Activated T-helper 1 cell treated with anti-CD3 and anti-CD28 coated beads, Interleukin-12 subunit alpha, Interleukin-12 subunit beta, Interleukin-2, Interleukin-4 antibody, amounts not matched to agents 30 ng/mL and 10 ng/mL and 1 ng/mL, durations not matched to agents 14 hours and 24 hours and 36 hours (primary cell): ENCODE measurements at regions of chr19 and their contacts with region 1.

Region 1: DNA sequence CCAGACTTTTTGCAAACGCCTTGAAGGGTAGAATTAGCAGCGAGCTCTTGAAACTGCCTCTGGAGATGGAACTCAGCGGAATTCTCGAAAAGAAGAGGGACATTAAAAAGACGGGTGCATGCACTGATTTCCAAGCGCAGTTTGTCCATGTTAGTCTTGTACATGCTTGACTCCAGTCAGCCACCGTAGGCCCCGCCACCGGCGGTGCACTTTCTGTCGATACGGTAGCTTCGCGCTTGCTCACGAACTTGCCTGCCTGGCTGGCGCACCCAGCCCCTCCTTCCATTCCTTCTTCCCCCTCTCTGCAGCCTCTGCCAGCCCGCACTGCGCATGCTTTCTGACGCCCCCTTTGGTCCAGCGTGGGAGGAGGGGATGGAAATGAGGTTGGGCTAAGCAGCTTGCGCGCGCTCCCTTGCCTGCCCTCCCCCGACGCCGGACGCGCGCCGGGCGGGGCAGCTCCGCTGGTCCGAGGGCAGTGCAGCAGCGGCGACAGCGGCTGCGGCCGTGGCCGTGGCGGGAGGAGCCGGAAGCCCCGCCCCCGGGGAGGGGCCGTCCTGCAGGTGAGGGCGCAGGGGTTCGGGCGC is at the start of gene ZNF575:
- DNase-seq: peak; percentile 81
- H3K4me3 Mint-ChIP-seq: peak within 1 kb of the TSS; percentile 96
- H3K27ac Mint-ChIP-seq: peak within 1 kb of the TSS; percentile 99
- H3K4me1 Mint-ChIP-seq: peaks cover 23% of the 10 kb centered on the region
- H3K27me3 Mint-ChIP-seq: no peaks in the 10 kb centered on the region
- total RNA-seq, gene ZNF575: 1.4 and 2.6 TPM in 2 replicates

Region 2: DNA sequence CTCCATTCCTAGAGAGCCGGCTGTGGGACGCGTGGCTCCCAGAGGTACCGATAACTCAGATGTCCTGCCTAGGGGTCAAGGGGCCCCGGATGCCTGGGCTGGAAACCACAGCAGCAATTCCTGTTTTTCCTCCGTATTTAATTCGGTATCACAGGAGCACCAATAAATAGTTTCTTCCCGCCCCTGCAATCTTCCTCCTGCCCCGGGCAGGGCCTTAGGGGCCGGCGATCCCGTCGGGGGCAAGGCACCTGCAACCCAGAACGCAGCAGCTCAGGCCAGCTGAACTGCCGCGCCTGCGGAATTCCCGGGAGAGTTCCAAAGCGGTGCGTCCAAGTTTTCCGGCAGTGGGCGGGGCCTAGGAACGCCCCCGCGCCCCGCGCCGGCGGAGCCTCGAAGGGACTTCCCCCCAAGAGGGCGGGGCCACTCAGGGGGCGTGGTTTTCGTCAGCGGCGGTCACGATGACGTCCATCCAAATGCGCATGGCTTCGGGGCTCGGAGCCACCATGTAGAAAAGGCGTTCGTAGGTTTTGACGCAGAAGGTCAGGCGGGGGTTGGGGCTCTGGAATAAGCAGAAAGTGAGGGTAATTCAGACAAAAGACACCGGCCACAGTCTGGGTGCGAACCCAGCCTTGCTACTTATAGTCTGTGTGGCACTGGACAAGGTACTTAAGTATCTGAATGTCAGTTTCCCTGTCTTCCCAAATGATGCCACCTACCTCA is 57.9 kb before region 1 on chr19:
- intact Hi-C with region 1: loop called (anchors 1 kb)
- DNase-seq: peak; percentile 91
- H3K4me3 Mint-ChIP-seq: peak overlapping the region; percentile 77
- H3K27ac Mint-ChIP-seq: peak overlapping the region; percentile 89
- H3K4me1 Mint-ChIP-seq: peaks cover 14% of the 10 kb centered on the region
- H3K27me3 Mint-ChIP-seq: no peaks in the 10 kb centered on the region

Region 3: GRCh38 chr19:43519436-43520088 is 13.5 kb before region 1 on chr19:
- intact Hi-C with region 1: loop called (anchors 2 kb)
- DNase-seq: peak; percentile 63
- H3K4me3 Mint-ChIP-seq: peak overlapping the region; percentile 1
- H3K27ac Mint-ChIP-seq: peak overlapping the region; percentile 32
- H3K4me1 Mint-ChIP-seq: peaks cover 14% of the 10 kb centered on the region
- H3K27me3 Mint-ChIP-seq: no peaks in the 10 kb centered on the region

Region 4: DNA sequence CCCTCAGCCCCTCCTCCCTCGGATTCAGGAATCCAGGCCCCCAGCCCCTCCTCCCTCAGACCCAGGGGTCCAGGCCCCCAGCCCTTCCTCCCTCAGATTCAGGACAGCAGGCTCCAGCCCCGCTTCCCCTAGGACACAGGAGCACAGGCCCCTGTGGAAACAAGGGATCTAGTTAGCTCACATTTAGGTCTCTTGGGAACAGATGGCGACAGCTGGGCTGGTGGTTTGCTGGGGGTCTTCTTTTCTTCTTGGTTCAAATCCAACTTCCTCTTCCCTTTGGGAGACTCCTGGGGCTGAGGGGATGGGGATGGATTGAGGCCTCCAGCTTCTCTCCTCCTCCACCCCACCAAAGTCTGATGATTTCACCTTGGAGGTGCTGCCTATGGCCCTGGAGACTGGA is 19.6 kb after region 1 on chr19:
- intact Hi-C with region 1: no loop called
- DNase-seq: no peak
- H3K4me3 Mint-ChIP-seq: no peak overlapping the region
- H3K27ac Mint-ChIP-seq: no peak overlapping the region
- H3K4me1 Mint-ChIP-seq: peaks cover 9% of the 10 kb centered on the region
- H3K27me3 Mint-ChIP-seq: no peaks in the 10 kb centered on the region

Region 5: GRCh38 chr19:43562698-43563241 is 29.7 kb after region 1 on chr19:
- intact Hi-C with region 1: loop called (anchors 2 kb)
- DNase-seq: peak; percentile 54
- H3K4me3 Mint-ChIP-seq: peak overlapping the region; percentile 37
- H3K27ac Mint-ChIP-seq: peak overlapping the region; percentile 74
- H3K4me1 Mint-ChIP-seq: peaks cover 32% of the 10 kb centered on the region
- H3K27me3 Mint-ChIP-seq: no peaks in the 10 kb centered on the region

Region 6: GRCh38 chr19:43575156-43575950 is 42.3 kb after region 1 on chr19 and contains the starts of genes PINLYP and XRCC1:
- intact Hi-C with region 1: loop called (anchors 1 kb)
- DNase-seq: peak; percentile 95
- H3K4me3 Mint-ChIP-seq: peak within 1 kb of the TSS; percentile 96
- H3K27ac Mint-ChIP-seq: peak within 1 kb of the TSS; percentile 91
- H3K4me1 Mint-ChIP-seq: peaks cover 25% of the 10 kb centered on the region
- H3K27me3 Mint-ChIP-seq: peaks cover 3% of the 10 kb centered on the region
- total RNA-seq, gene PINLYP: 4.9 and 5.7 TPM in 2 replicates
- total RNA-seq, gene XRCC1: 27.4 and 28.7 TPM in 2 replicates